HepG2 (cell line): ENCODE measurements at regions of chr4 and their contacts with region 1.

Region 1: DNA sequence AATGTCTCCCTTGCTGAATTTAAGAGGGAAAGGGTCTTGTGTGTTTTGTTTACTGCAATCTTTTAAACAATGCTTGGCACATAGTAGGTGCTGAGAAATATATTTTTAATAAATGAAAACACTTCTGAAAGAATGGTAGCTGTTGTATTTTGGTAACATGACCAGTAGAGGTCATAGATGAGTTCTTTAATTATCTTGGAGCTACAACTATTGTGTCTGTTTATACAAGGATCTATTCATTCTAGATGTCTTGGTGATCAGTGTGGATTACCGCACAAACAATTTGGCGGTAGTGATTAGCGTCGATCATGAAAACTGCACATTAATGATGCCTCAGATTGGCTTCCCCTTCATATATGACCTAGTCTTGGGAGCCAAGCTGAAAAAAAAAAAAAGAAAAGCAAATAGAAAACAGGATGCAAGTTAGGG is 21.4 kb upstream of the SCRG1 start:
- DNase-seq: peak; percentile 8
- ATAC-seq: no peak; the same call in 2 of the 3 replicates
- H3K4me3 ChIP-seq: no peak overlapping the region
- H3K27ac ChIP-seq: no peak overlapping the region
- H3K4me1 ChIP-seq: no peaks in the 10 kb centered on the region
- H3K27me3 ChIP-seq: no peaks in the 10 kb centered on the region
- CTCF ChIP-seq: peak; percentile 41
- EP300 ChIP-seq: no peak
- POLR2A ChIP-seq: no peak
- RAD21 ChIP-seq: no peak

Region 2: DNA sequence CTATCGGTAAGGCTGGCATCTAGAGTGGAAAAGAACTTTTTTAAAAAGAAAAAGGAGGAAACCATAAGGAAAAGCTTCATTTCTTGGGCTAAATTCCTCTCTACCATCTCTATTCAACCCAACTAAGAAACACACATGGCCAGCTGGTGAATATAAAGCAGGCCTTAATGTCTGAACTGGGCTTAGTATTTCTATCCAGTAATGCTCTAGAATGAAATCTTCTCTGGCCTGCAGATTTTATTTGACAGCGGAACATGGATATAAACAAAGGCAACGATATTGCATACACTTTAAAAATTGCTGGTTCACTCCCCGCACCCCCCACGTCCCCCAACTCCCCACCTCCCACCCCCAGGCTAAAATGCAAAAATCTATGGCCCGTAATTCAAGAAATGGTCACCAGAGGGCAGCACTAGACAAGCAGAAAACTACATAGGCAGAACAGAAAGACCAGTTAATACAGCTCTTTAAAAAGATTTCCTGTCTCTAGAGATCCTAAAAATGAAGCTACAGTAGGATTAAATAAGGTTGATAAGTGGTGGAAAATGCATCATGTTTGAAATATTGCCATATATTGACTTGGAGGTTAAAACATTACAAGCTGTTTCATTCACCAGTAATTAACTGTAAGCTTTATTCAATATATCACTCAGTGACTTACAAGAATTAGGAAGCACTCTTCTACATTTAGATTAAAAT is 407.0 kb before region 1 on chr4:
- CTCF ChIA-PET with region 1: no interaction called
- POLR2A ChIA-PET with region 1: no interaction called
- in situ Hi-C with region 1: loop called (anchors 25 kb)
- intact Hi-C with region 1: no loop called
- DNase-seq: peak; percentile 21
- ATAC-seq: peak; percentile 70
- H3K4me3 ChIP-seq: no peak overlapping the region
- H3K27ac ChIP-seq: no peak overlapping the region
- H3K4me1 ChIP-seq: no peaks in the 10 kb centered on the region
- H3K27me3 ChIP-seq: peaks cover 0 to 1% of the 10 kb centered on the region in 2 experiments; a peak in 1 of 5 replicates
- CTCF ChIP-seq: peak; percentile 54
- EP300 ChIP-seq: no peak
- POLR2A ChIP-seq: no peak
- RAD21 ChIP-seq: no peak

Region 3: DNA sequence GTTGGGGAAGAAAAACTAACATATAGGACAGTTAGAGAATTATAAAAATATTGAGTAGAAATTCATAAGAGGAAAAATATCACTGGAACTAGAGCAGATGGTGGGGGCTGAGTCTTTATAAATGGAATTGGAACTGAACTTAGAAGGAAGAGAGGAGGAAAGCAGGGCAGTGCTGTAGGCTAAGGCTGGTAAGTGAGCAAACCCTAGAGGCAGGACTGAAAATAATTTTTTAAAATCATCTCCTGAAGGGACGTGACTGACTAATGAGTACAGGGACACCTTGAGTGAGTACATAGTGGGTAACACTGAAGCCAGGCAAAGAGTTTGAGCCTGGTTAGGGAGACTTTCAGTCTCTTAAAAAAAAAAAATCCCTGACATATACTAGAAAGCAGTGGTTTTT is 188.4 kb before region 1 on chr4:
- CTCF ChIA-PET with region 1: no interaction called
- POLR2A ChIA-PET with region 1: no interaction called
- in situ Hi-C with region 1: no loop called
- intact Hi-C with region 1: no loop called
- DNase-seq: no peak
- ATAC-seq: peak; percentile 59; the same call in 2 of the 3 replicates
- H3K4me3 ChIP-seq: no peak overlapping the region
- H3K27ac ChIP-seq: no peak overlapping the region
- H3K4me1 ChIP-seq: no peaks in the 10 kb centered on the region
- H3K27me3 ChIP-seq: no peaks in the 10 kb centered on the region
- CTCF ChIP-seq: no peak
- EP300 ChIP-seq: no peak
- POLR2A ChIP-seq: no peak
- RAD21 ChIP-seq: no peak

Region 4: DNA sequence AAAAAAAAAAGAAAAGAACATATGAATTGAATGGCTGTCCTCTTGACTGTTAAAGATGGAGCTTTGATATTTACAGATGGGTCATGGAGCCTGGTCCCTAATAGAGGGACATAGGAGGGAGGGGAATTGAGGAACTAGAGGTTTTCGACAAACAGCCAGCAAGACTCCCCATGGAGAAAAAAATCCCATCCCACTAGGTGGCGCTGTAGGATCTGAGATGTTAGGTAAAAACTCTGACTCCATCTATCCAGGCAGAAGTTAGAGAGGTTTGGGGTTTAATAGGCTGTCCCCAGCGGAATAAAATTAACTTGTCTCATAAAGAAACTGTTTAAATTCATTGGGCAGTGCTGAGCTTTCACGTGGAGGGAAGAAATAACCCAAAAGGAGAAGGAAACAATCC is 132.0 kb before region 1 on chr4:
- CTCF ChIA-PET with region 1: interaction called, 16 read pairs
- POLR2A ChIA-PET with region 1: no interaction called
- in situ Hi-C with region 1: loop called (anchors 10 kb)
- intact Hi-C with region 1: loop called (anchors 1 kb)
- DNase-seq: peak; percentile 60
- ATAC-seq: peak; percentile 84
- H3K4me3 ChIP-seq: no peak overlapping the region
- H3K27ac ChIP-seq: no peak overlapping the region
- H3K4me1 ChIP-seq: no peaks in the 10 kb centered on the region
- H3K27me3 ChIP-seq: 0 out of 5 replicates have a peak, but pooled peaks cover 0 to 3% of the 10 kb centered on the region in 2 experiments
- CTCF ChIP-seq: peak; percentile 75
- EP300 ChIP-seq: no peak
- POLR2A ChIP-seq: no peak
- RAD21 ChIP-seq: 0 out of 2 replicates have a peak, but pooled peaks have one; percentile 21

Region 5: DNA sequence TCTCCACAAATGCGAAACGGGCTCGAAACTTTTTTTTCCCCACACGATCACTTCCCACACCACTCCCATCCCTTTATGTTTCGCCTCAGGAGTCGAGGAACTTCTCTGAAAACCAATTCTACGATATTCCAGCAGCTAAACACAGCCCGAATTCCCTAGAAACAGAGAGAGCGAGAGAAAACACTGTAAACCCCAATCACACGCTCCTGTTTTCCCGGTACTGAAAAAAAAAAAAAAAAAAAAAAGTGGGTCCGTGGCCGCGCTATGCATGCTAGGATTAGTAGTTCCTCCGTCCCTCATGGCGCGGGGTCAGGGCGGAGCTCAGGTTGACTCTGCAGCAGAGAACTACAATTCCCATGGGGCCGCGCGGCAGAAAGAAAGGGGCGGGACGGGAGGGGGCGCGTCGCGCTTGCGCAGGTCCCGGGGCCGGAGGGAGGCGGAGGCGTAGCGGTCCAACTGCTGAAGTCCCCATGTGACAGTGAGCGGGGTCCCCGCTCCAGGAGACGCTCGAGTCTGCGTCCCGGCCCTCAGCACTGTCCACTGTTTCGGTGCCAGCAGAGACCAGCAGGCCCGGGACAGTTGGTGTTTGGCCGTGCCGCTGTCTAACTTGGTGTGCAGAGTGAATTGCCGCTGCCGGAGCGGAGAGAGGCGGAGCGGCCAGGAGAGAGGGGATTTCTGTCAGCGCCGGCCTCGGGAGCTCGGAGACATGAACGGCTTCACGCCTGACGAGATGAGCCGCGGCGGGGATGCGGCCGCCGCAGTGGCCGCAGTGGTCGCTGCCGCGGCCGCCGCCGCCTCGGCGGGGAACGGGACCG is 49.7 kb before region 1 on chr4 and contains the start of gene SAP30:
- CTCF ChIA-PET with region 1: no interaction called
- POLR2A ChIA-PET with region 1: no interaction called
- in situ Hi-C with region 1: no loop called
- intact Hi-C with region 1: loop called (anchors 2 kb)
- DNase-seq: peak; percentile 95
- ATAC-seq: peak; percentile 89
- H3K4me3 ChIP-seq: peak within 1 kb of the TSS; percentile 91 to 94 (median 92)
- H3K27ac ChIP-seq: peak within 1 kb of the TSS; percentile 91
- H3K4me1 ChIP-seq: peaks cover 17% of the 10 kb centered on the region
- H3K27me3 ChIP-seq: no peaks in the 10 kb centered on the region; a peak in 1 of 5 replicates
- CTCF ChIP-seq: no peak
- EP300 ChIP-seq: no peak
- POLR2A ChIP-seq: peak; percentile 94 to 99
- RAD21 ChIP-seq: no peak
- total RNA-seq, gene SAP30: 22.3 and 25.1 TPM in 2 replicates

Region 6: GRCh38 chr4:173990126-173990868 is 570.0 kb after region 1 on chr4:
- CTCF ChIA-PET with region 1: no interaction called
- POLR2A ChIA-PET with region 1: no interaction called
- in situ Hi-C with region 1: no loop called
- intact Hi-C with region 1: loop called (anchors 10 kb)
- DNase-seq: peak; percentile 15
- ATAC-seq: peak; percentile 74
- H3K4me3 ChIP-seq: no peak overlapping the region
- H3K27ac ChIP-seq: no peak overlapping the region
- H3K4me1 ChIP-seq: no peaks in the 10 kb centered on the region
- H3K27me3 ChIP-seq: no peaks in the 10 kb centered on the region; a peak in 1 of 5 replicates
- CTCF ChIP-seq: peak; percentile 35
- EP300 ChIP-seq: no peak
- POLR2A ChIP-seq: no peak
- RAD21 ChIP-seq: no peak